Caco-2 (cell line): ENCODE measurements at regions of chr2 and their contacts with region 1.

Region 1: GRCh38 chr2:186256540-186256939 is 229.5 kb upstream of the ZC3H15 start:
- DNase-seq: peak in 1 of 2 experiments; percentile 33
- H3K4me3 ChIP-seq: no peak overlapping the region
- H3K4me3 Mint-ChIP-seq: no peak overlapping the region
- H3K27ac Mint-ChIP-seq: no peak overlapping the region
- H3K4me1 ChIP-seq: no peaks in the 10 kb centered on the region
- H3K4me1 Mint-ChIP-seq: no peaks in the 10 kb centered on the region
- H3K27me3 ChIP-seq: no peaks in the 10 kb centered on the region
- H3K27me3 Mint-ChIP-seq: no peaks in the 10 kb centered on the region
- CTCF ChIP-seq: peak; percentile 50 to 54

Region 2: DNA sequence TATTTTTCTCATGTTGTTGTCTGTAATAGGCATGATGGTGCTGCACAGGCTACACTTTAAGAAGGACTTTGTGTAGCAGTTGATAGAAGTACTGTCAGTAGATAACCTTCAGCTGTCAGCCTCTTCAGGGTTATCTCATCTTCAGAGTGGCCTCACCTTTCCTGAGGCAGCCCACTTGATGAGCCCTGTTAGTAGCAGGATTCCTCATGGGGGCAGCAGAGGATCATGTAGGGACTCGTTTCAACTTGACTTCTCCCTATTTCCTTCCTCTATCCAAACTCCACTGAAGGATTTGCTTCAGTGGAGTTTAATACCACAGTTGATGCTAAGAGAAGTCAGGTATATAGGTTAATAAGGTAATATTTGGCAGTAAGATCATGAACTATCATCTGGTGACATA is 1048.3 kb before region 1 on chr2:
- CTCF ChIA-PET with region 1: no interaction called
- POLR2A ChIA-PET with region 1: no interaction called
- intact Hi-C with region 1: loop called (anchors 1 kb)
- DNase-seq: peak; percentile 77 to 78
- H3K4me3 ChIP-seq: no peak overlapping the region
- H3K4me3 Mint-ChIP-seq: no peak overlapping the region
- H3K27ac Mint-ChIP-seq: no peak overlapping the region
- H3K4me1 ChIP-seq: no peaks in the 10 kb centered on the region
- H3K4me1 Mint-ChIP-seq: no peaks in the 10 kb centered on the region
- H3K27me3 ChIP-seq: no peaks in the 10 kb centered on the region; the same call in 1 of the 2 replicates
- H3K27me3 Mint-ChIP-seq: no peaks in the 10 kb centered on the region
- CTCF ChIP-seq: peak; percentile 73 to 84

Region 3: DNA sequence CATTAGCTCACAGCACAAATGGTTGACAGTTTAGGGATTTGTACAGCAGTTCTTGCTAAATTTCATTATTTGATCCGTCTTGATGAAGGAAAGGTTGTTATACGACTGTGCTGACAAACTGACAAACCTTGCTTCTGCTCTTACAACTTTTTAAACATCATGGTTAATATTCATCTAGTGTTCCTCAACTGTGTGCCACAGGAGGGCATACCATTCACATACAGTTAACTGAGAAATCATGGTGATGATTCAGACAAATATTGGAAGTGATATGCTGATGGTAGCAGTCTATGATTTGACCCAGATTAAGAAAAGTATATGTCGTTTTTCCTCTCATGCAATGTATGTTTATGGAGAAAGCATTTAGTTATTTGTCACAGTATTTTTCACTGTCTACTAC is 647.7 kb before region 1 on chr2:
- CTCF ChIA-PET with region 1: no interaction called
- POLR2A ChIA-PET with region 1: no interaction called
- intact Hi-C with region 1: loop called (anchors 2 kb)
- DNase-seq: no peak
- H3K4me3 ChIP-seq: no peak overlapping the region
- H3K4me3 Mint-ChIP-seq: no peak overlapping the region
- H3K27ac Mint-ChIP-seq: no peak overlapping the region
- H3K4me1 ChIP-seq: no peaks in the 10 kb centered on the region
- H3K4me1 Mint-ChIP-seq: no peaks in the 10 kb centered on the region
- H3K27me3 ChIP-seq: no peaks in the 10 kb centered on the region
- H3K27me3 Mint-ChIP-seq: no peaks in the 10 kb centered on the region
- CTCF ChIP-seq: no peak

Region 4: GRCh38 chr2:185813682-185814081 is 442.9 kb before region 1 on chr2:
- CTCF ChIA-PET with region 1: no interaction called
- POLR2A ChIA-PET with region 1: no interaction called
- intact Hi-C with region 1: loop called (anchors 10 kb)
- DNase-seq: peak; percentile 28 to 50
- H3K4me3 ChIP-seq: no peak overlapping the region
- H3K4me3 Mint-ChIP-seq: no peak overlapping the region
- H3K27ac Mint-ChIP-seq: no peak overlapping the region
- H3K4me1 ChIP-seq: peaks cover 7% of the 10 kb centered on the region
- H3K4me1 Mint-ChIP-seq: peaks cover 9% of the 10 kb centered on the region
- H3K27me3 ChIP-seq: no peaks in the 10 kb centered on the region
- H3K27me3 Mint-ChIP-seq: no peaks in the 10 kb centered on the region
- CTCF ChIP-seq: no peak

Region 5: DNA sequence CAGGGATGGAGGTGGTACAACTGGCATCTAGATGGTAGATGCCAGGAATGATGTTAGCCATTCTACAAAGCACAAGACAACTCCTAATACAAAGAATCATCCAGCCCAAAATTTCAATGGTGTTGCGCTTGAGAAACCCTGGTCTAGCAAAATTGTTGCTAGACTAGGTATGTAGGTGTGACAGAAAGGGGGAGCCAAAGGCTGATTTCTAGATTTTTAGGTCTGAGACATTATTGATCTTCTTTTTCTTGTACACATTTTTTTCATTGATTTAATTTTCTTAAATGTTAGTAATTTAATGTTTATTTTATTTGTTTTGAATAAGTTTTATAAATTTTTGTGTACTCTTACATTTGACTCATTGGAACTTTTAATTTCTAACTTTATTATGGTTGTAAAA is 301.5 kb before region 1 on chr2:
- CTCF ChIA-PET with region 1: no interaction called
- POLR2A ChIA-PET with region 1: no interaction called
- intact Hi-C with region 1: loop called (anchors 1 kb)
- DNase-seq: no peak
- H3K4me3 ChIP-seq: no peak overlapping the region
- H3K4me3 Mint-ChIP-seq: no peak overlapping the region
- H3K27ac Mint-ChIP-seq: no peak overlapping the region
- H3K4me1 ChIP-seq: no peaks in the 10 kb centered on the region
- H3K4me1 Mint-ChIP-seq: no peaks in the 10 kb centered on the region
- H3K27me3 ChIP-seq: no peaks in the 10 kb centered on the region
- H3K27me3 Mint-ChIP-seq: no peaks in the 10 kb centered on the region
- CTCF ChIP-seq: no peak

Region 6: GRCh38 chr2:186294248-186294888 is 37.8 kb after region 1 on chr2:
- CTCF ChIA-PET with region 1: no interaction called
- POLR2A ChIA-PET with region 1: no interaction called
- intact Hi-C with region 1: no loop called
- DNase-seq: no peak
- H3K4me3 ChIP-seq: no peak overlapping the region
- H3K4me3 Mint-ChIP-seq: no peak overlapping the region
- H3K27ac Mint-ChIP-seq: no peak overlapping the region
- H3K4me1 ChIP-seq: no peaks in the 10 kb centered on the region
- H3K4me1 Mint-ChIP-seq: peaks cover under 1% of the 10 kb centered on the region
- H3K27me3 ChIP-seq: no peaks in the 10 kb centered on the region
- H3K27me3 Mint-ChIP-seq: no peaks in the 10 kb centered on the region
- CTCF ChIP-seq: no peak

Region 7: DNA sequence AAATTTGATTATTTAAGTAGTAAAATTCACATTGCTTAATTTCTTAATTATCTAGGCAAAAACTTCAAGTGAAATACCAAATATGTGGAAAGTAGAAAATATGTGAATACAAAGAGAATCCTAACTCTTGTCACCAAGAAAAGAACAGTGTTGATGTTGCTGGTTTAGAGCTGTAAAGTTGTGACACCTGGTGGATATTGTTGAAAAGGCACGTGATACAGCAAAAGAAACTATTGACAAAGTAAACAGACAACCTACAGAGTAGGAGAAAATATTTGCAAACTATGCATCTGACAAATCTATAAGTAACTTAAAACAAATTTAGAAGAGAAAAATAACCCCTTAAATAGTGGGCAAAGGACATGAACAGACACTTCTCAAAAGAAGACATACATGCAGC is 203.9 kb after region 1 on chr2:
- CTCF ChIA-PET with region 1: no interaction called
- POLR2A ChIA-PET with region 1: no interaction called
- intact Hi-C with region 1: loop called (anchors 1 kb)
- DNase-seq: peak in 1 of 2 experiments; percentile 43
- H3K4me3 ChIP-seq: no peak overlapping the region
- H3K4me3 Mint-ChIP-seq: no peak overlapping the region
- H3K27ac Mint-ChIP-seq: no peak overlapping the region
- H3K4me1 ChIP-seq: no peaks in the 10 kb centered on the region
- H3K4me1 Mint-ChIP-seq: peaks cover 5% of the 10 kb centered on the region
- H3K27me3 ChIP-seq: no peaks in the 10 kb centered on the region
- H3K27me3 Mint-ChIP-seq: no peaks in the 10 kb centered on the region
- CTCF ChIP-seq: peak; percentile 35 to 43

Region 8: GRCh38 chr2:186717320-186718007 is 460.9 kb after region 1 on chr2:
- CTCF ChIA-PET with region 1: no interaction called
- POLR2A ChIA-PET with region 1: no interaction called
- intact Hi-C with region 1: no loop called
- DNase-seq: no peak
- H3K4me3 ChIP-seq: no peak overlapping the region
- H3K4me3 Mint-ChIP-seq: no peak overlapping the region
- H3K27ac Mint-ChIP-seq: no peak overlapping the region
- H3K4me1 ChIP-seq: no peaks in the 10 kb centered on the region
- H3K4me1 Mint-ChIP-seq: no peaks in the 10 kb centered on the region
- H3K27me3 ChIP-seq: no peaks in the 10 kb centered on the region
- H3K27me3 Mint-ChIP-seq: no peaks in the 10 kb centered on the region
- CTCF ChIP-seq: no peak